ENCODE measurements at regions of chr17 and their contacts with region 1.

Region 1: GRCh38 chr17:54663039-54663876 is 237.4 kb upstream of the TOM1L1 start:
- DNase-seq: no peak
- ATAC-seq: no peak
- H3K4me3 Mint-ChIP-seq: no peak overlapping the region
- H3K27ac Mint-ChIP-seq: no peak overlapping the region
- H3K4me1 Mint-ChIP-seq: no peaks in the 10 kb centered on the region
- H3K27me3 Mint-ChIP-seq: no peaks in the 10 kb centered on the region
- CTCF ChIP-seq: no peak

Region 2: GRCh38 chr17:54718286-54718685 is 55.0 kb after region 1 on chr17:
- CTCF ChIA-PET with region 1: no interaction called
- POLR2A ChIA-PET with region 1: no interaction called
- intact Hi-C with region 1: loop called (anchors 10 kb)
- DNase-seq: no peak
- ATAC-seq: no peak
- H3K4me3 Mint-ChIP-seq: no peak overlapping the region
- H3K27ac Mint-ChIP-seq: no peak overlapping the region
- H3K4me1 Mint-ChIP-seq: no peaks in the 10 kb centered on the region
- H3K27me3 Mint-ChIP-seq: no peaks in the 10 kb centered on the region
- CTCF ChIP-seq: no peak